Stomach (tissue), 19 donors: ENCODE measurements at regions of chr1 and their contacts with region 1.

Region 1: GRCh38 chr1:244599937-244600350 is 53.0 kb upstream of the DESI2 start:
- DNase-seq: peak; percentile 37 to 84
- H3K4me3 ChIP-seq: peak overlapping the region in 1 of 4 donors; percentile 14
- H3K27ac ChIP-seq: peak overlapping the region; percentile 30 to 71 (median 36)
- H3K4me1 ChIP-seq: no peaks in the 10 kb centered on the region
- H3K27me3 ChIP-seq: peaks cover 0 to 8% (median 0%) of the 10 kb centered on the region in 3 donors
- CTCF ChIP-seq: no peak
- EP300 ChIP-seq: no peak
- POLR2A ChIP-seq: no peak

Region 2: DNA sequence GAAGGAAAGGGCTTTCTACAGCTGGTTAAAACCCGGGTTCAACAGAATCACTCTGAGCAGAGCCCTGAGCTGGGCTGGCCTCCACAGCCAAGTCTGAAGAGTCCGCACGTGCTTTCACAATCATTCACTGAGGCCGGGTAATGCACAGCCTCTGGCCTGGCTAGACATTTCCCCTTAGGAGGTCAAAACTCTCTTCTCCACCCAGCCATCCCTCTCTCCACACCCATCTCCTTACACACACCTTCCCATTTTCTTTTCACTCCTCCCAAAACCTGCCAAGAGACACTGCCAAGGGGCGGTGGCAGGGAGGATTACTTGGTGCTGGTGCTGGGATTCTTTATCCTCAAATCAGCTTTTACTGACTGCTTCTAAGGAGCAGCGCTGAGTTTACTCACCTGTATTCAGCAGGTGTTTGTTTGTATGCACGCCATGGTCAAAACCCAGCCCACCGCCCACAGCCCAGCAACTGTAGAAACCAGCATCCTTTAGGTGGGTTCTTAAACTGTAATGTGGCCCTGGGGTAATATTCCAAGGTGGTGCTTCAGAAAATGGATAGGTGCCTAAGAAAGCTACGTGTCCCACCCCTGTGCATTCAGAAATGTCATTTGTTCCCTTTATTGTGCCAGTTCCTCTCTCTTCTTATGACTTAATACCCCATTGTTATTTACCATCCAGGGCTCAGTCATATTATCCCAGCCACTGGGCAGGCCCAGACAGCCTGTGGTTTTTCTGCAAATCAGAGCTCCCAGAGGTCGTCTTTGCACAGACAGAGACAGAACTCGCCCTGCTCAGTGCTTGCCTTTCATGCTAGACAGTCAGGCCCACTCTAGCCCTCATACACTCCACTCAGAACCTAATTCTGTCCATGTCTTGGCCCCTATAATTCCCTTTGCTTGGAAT is 228.5 kb before region 1 on chr1:
- intact Hi-C with region 1: no loop called
- DNase-seq: no peak
- H3K4me3 ChIP-seq: no peak overlapping the region
- H3K27ac ChIP-seq: no peak overlapping the region
- H3K4me1 ChIP-seq: no peaks in the 10 kb centered on the region
- H3K27me3 ChIP-seq: no peaks in the 10 kb centered on the region
- CTCF ChIP-seq: no peak
- EP300 ChIP-seq: no peak
- POLR2A ChIP-seq: no peak

Region 3: GRCh38 chr1:244796718-244797406 is 196.9 kb after region 1 on chr1:
- intact Hi-C with region 1: loop called (anchors 5 kb)
- DNase-seq: peak; percentile 75 to 88
- H3K4me3 ChIP-seq: no peak overlapping the region
- H3K27ac ChIP-seq: no peak overlapping the region
- H3K4me1 ChIP-seq: peaks cover 0 to 8% (median 2%) of the 10 kb centered on the region in 4 donors
- H3K27me3 ChIP-seq: no peaks in the 10 kb centered on the region
- CTCF ChIP-seq: peak; percentile 6 to 94 (median 88)
- EP300 ChIP-seq: no peak
- POLR2A ChIP-seq: no peak